H1 (cell line): ENCODE measurements at regions of chr18 and their contacts with region 1.

Region 1: GRCh38 chr18:46281185-46282176 is 177.3 kb downstream of the HAUS1 start:
- DNase-seq: peak; percentile 50 to 88
- H3K4me3 ChIP-seq: no peak overlapping the region
- H3K27ac ChIP-seq: no peak overlapping the region
- H3K4me1 ChIP-seq: peaks cover 6 to 9% (median 7%) of the 10 kb centered on the region in 4 experiments; a peak in 6 of 7 replicates
- H3K27me3 ChIP-seq: no peaks in the 10 kb centered on the region
- CTCF ChIP-seq: peak; percentile 76 to 95 (median 94)
- EP300 ChIP-seq: no peak
- POLR2A ChIP-seq: no peak
- RAD21 ChIP-seq: peak; percentile 92 to 93

Region 2: GRCh38 chr18:45974088-45974536 is 307.4 kb before region 1 on chr18:
- CTCF ChIA-PET with region 1: no interaction called
- POLR2A ChIA-PET with region 1: no interaction called
- DNase-seq: no peak
- H3K4me3 ChIP-seq: no peak overlapping the region
- H3K27ac ChIP-seq: no peak overlapping the region
- H3K4me1 ChIP-seq: peaks cover 0 to 4% (median 3%) of the 10 kb centered on the region in 4 experiments; a peak in 3 of 7 replicates
- H3K27me3 ChIP-seq: peaks cover 0 to under 1% (median 0%) of the 10 kb centered on the region in 4 experiments; a peak in 1 of 7 replicates
- CTCF ChIP-seq: peak in 2 of 3 experiments; percentile 67 to 71; a peak in 3 of 4 replicates
- EP300 ChIP-seq: no peak
- POLR2A ChIP-seq: no peak
- RAD21 ChIP-seq: peak; percentile 81 to 90

Region 3: DNA sequence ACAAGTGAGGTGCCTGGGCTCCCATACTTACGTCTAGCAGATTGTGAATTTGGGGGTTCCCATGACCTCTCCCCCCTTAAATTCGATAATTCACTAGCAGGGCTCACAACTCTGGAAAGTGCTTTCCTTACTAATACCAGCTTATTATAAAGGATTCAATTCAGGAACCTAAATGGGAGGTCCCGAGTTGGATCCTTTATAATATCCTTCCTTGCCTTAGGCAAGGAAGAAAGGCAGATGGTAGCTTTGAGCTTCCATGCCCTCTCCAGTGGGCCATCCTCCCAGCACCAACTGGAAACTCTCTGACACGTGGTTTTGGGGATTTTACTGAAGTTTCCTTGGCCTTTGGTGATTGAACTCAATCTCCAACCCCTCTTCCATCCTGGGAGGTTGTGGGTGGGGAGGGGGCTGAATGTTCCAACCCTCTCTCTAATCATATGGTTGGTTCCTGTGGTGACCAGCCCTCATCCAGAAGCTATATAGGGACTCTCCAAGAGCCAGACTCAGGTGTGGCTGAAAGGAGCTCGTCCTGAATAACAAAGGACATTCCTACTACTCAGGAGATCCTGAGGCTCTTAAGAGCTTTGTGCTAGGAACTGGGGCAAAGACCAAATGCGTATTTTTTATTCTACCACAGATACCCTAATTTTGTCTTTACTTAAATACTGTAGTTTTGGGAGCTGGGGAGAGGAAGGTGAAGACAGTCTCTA is 115.1 kb before region 1 on chr18:
- CTCF ChIA-PET with region 1: interaction called, 18 read pairs
- POLR2A ChIA-PET with region 1: no interaction called
- DNase-seq: no peak
- H3K4me3 ChIP-seq: no peak overlapping the region; a peak in 1 of 8 replicates
- H3K27ac ChIP-seq: no peak overlapping the region
- H3K4me1 ChIP-seq: peaks cover 4 to 8% (median 6%) of the 10 kb centered on the region in 4 experiments; a peak in 6 of 7 replicates
- H3K27me3 ChIP-seq: no peaks in the 10 kb centered on the region
- CTCF ChIP-seq: no peak
- EP300 ChIP-seq: peak in 1 of 2 experiments; percentile 31; a peak in 1 of 3 replicates
- POLR2A ChIP-seq: no peak
- RAD21 ChIP-seq: no peak

Region 4: GRCh38 chr18:46333431-46334135 is 52.1 kb after region 1 on chr18:
- CTCF ChIA-PET with region 1: interaction called, 196 read pairs
- POLR2A ChIA-PET with region 1: interaction called, 3 read pairs
- DNase-seq: peak in 1 of 2 experiments; percentile 56
- H3K4me3 ChIP-seq: peak overlapping the region; percentile 47 to 79 (median 58)
- H3K27ac ChIP-seq: no peak overlapping the region
- H3K4me1 ChIP-seq: peaks cover 6 to 24% (median 15%) of the 10 kb centered on the region in 4 experiments
- H3K27me3 ChIP-seq: peaks cover 0 to 22% (median 14%) of the 10 kb centered on the region in 4 experiments; a peak in 5 of 7 replicates
- CTCF ChIP-seq: no peak
- EP300 ChIP-seq: no peak
- POLR2A ChIP-seq: no peak
- RAD21 ChIP-seq: no peak

Region 5: DNA sequence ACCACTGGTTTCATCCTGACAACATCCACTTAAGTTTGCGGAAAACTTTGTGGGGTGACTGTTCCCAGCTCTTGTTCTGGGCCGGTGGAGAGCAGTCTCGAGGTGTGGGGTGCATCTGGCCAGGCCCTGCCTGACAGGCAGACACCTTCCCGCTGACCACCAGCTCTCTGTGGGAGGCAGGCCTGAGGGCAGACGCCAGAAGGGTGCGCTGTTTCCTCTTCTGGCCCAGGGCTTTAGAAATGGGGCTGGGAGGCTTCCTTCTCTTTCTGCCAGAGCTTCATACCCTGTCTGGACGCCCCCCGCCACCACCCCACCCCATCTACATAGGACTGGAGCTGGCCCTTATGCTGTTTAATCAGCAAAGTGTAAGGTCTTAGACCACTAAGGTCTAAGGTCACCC is 111.7 kb after region 1 on chr18:
- CTCF ChIA-PET with region 1: interaction called, 84 read pairs
- POLR2A ChIA-PET with region 1: no interaction called
- DNase-seq: peak in 1 of 2 experiments; percentile 88
- H3K4me3 ChIP-seq: no peak overlapping the region
- H3K27ac ChIP-seq: no peak overlapping the region
- H3K4me1 ChIP-seq: no peaks in the 10 kb centered on the region; a peak in 1 of 7 replicates
- H3K27me3 ChIP-seq: no peaks in the 10 kb centered on the region; a peak in 1 of 7 replicates
- CTCF ChIP-seq: peak; percentile 85 to 92 (median 86)
- EP300 ChIP-seq: no peak
- POLR2A ChIP-seq: no peak
- RAD21 ChIP-seq: peak; percentile 84

Region 6: GRCh38 chr18:46474487-46475389 is 193.3 kb after region 1 on chr18:
- CTCF ChIA-PET with region 1: interaction called, 66 read pairs
- POLR2A ChIA-PET with region 1: no interaction called
- DNase-seq: no peak
- H3K4me3 ChIP-seq: no peak overlapping the region
- H3K27ac ChIP-seq: no peak overlapping the region
- H3K4me1 ChIP-seq: peaks cover 0 to 2% (median 0%) of the 10 kb centered on the region in 4 experiments; a peak in 3 of 7 replicates
- H3K27me3 ChIP-seq: peaks cover 0 to 2% (median 0%) of the 10 kb centered on the region in 4 experiments; a peak in 1 of 7 replicates
- CTCF ChIP-seq: no peak
- EP300 ChIP-seq: no peak
- POLR2A ChIP-seq: no peak
- RAD21 ChIP-seq: peak in 1 of 2 experiments; percentile 8; a peak in 1 of 4 replicates

Region 7: DNA sequence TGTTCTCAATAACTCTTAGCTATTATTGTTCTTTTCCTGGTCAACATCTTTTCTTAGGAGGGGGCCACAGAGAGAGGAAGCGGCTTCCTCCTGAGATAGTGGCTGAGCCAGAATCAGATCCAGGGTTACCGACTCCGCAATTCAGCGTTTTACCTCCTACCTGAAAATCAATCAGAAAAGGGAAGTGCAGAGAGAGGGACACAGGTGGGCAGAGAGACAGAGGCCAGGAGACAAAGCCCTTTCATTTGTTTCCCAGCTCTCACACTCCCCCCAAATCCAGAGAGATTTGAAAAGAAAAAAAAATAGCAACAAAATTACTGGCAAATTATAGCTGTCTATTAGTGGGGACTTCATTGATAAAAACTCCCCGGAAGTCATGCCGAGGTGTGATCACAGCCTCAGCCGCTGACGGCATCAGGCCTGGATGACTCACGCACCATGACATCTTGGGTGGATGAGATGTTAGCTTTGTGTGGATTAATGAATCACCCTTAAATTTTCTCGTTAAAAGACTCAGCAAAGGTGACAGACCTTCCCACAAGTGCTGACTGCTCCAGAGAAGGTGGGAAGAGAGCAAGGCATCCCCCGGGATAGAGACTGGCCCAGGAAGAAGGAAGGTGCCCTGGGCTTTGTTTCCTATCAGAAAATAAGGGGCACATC is 254.9 kb after region 1 on chr18:
- CTCF ChIA-PET with region 1: interaction called, 14 read pairs
- POLR2A ChIA-PET with region 1: no interaction called
- DNase-seq: no peak
- H3K4me3 ChIP-seq: no peak overlapping the region
- H3K27ac ChIP-seq: no peak overlapping the region
- H3K4me1 ChIP-seq: no peaks in the 10 kb centered on the region
- H3K27me3 ChIP-seq: no peaks in the 10 kb centered on the region
- CTCF ChIP-seq: no peak
- EP300 ChIP-seq: no peak
- POLR2A ChIP-seq: no peak
- RAD21 ChIP-seq: no peak